HEK293T (cell line): ENCODE measurements at regions of chr12 and their contacts with region 1.

Region 1: DNA sequence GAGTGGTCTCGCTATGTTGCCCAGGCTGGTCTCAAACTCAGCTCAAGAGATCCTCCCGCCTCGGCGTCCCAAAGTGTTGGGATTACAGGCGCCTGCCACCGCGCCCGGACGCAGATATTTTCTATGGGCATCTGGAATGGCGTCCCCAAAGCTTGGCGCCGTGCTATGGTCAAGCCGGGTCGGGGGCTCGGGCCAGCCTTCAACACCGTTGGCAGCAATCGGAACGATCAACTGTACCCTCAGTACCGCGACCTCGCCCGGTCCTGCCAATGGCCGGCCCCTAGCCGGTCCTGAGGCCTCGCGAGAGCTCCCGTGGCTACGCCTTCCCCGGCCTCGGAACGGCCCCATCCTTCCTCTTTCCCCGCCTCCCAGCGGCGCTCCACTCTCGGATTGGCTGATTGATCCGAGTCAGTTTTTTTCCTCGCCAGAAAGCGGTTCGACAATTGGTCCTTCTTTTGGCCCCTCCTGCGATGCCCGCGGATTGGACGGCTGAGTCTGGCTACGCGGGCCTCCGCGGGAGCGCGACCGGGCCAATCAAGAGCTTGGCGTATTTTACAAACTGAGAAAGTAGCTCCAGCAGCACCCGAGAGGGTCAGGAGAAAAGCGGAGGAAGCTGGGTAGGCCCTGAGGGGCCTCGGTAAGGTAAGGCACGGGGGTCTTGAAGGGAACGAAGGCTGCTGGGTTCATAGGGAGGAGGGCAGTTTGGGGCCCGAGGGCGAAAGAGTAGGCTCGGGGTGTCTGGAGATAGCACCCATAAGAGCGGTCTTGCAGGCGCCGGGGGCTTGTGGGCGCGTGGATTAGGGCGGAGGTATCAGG is at the start of gene TROAP:
- DNase-seq: peak; percentile 97

Region 2: GRCh38 chr12:49200919-49201594 is 121.9 kb before region 1 on chr12:
- CTCF ChIA-PET with region 1: no interaction called
- POLR2A ChIA-PET with region 1: no interaction called
- DNase-seq: no peak

Region 3: GRCh38 chr12:49225556-49226181 is 97.2 kb before region 1 on chr12:
- CTCF ChIA-PET with region 1: no interaction called
- POLR2A ChIA-PET with region 1: no interaction called
- DNase-seq: no peak

Region 4: GRCh38 chr12:49279706-49280159 is 43.2 kb before region 1 on chr12:
- CTCF ChIA-PET with region 1: no interaction called
- POLR2A ChIA-PET with region 1: interaction called, 11 read pairs
- DNase-seq: no peak

Region 5: GRCh38 chr12:49296034-49296835 is 26.7 kb before region 1 on chr12:
- CTCF ChIA-PET with region 1: interaction called, 6 read pairs
- POLR2A ChIA-PET with region 1: interaction called, 68 read pairs
- DNase-seq: peak; percentile 88

Region 6: DNA sequence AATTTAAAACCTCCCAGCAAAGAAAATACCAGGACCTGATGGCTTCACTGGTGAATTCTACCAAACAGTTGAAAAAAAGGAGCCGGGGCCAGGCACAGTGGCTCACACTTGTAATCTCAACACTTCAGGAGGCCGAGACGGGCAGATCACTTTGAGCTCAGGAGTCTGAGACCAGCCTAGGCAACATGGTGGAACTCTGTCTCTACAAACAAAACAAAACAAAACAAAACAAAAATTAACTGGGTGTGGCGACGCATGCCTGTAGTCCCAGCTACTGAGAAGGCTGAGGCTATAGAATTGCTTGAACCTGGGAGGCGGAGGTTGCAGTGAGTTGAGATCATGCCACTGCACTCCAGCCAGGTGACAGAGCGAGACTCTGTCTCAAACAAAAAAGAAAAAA is 13.5 kb before region 1 on chr12:
- CTCF ChIA-PET with region 1: interaction called, 5 read pairs
- POLR2A ChIA-PET with region 1: interaction called, 31 read pairs
- DNase-seq: no peak

Region 7: DNA sequence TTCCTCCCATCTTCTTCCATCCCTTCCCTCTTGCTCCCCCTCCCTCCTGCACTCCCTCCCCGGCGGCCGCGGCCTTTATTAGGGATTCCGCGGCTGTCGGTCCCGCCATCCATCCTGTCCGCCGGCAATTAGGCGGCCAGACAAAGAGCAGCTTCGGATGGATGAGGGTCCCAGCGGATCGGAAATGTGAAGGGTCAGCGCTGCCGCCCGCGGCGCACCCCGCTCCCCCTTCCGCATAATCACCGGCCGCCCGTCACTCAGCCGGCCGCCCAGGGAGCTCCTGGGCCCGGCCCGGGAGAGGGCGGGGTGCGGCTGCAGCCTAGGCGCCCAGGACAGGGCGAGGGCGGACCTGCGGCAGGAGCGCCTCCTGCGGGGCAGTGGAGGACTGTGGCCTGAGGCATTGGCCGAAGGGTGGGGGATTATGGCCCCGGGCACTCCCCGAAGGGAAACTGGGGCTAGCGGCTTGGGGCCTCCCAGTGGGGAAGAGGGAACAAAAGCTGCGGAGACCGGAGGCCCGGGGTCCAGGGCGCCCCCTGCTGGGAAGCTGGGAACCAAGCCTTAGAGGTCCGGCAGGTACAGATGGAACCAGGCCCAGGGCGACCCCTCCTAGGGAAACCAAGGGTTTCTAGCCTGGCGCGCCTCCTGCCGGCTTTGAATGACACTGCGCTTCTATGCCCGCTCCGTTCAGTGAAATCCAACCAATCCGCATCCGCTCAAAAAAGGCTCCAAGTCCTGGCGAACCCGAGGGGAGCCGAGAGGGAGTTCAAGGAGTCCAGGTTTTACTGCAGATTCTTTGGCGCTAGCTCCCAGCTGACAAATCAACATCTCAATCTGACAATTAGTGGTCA is 19.4 kb after region 1 on chr12:
- CTCF ChIA-PET with region 1: interaction called, 42 read pairs
- POLR2A ChIA-PET with region 1: interaction called, 42 read pairs
- DNase-seq: peak; percentile 88

Region 8: GRCh38 chr12:49388682-49389386 is 65.9 kb after region 1 on chr12:
- CTCF ChIA-PET with region 1: no interaction called
- POLR2A ChIA-PET with region 1: no interaction called
- DNase-seq: no peak